Activated CD8-positive, alpha-beta memory T cell treated with anti-CD3 and anti-CD28 coated beads, Interleukin-2, amount 10 ng/mL, durations not matched to agents 7 days and 5 days (primary cell): ENCODE measurements at regions of chr2 and their contacts with region 1.

Region 1: DNA sequence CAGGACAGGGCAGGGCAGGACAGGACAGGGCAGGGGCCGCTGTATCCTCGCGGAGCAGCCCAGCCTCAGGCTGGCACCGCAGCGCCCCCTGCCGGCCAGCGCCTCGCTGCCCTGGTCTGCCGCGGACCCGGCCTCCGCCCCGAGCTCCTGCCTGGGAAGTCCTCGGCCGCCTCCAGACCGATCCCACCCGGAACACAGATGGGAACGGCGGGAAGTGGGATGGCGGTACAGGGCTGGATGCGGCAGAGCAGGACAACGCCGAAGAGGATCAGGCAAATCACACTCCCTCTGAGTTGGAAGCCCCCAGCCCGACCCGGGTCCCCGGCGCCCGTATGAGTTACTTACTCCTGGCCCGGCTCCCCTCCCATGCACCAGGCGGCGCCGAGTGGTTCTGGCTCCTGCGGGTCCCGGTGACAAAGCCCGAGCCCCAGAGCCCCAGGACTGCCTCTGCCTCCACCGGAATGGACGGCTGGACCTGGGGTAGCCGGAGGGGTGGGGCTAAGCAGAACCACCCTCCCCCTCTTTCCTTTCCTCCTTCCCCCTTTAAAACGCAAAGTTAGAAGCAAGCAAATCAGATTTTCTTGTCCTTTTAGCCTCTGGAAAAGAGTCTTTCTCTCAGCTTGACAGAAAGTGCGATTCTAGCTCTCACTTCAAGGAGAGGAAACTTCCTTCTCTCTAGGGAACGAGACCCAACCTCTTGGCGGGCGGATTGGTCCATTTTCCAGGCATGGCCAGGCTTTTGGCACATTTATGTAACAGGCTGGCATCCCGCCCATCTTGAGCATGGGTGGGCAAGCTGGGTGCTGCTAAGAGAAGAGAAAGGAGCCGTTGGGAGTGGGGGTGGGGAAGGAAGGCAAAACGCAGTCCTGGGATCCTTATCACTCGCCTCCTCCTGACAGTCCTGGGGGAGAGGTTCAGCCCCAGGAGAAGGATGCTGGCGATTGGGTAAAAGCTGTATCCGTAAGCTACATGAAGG is at the start of gene TP53I3:
- DNase-seq: peak; percentile 85
- ATAC-seq: peak; percentile 97
- H3K4me3 Mint-ChIP-seq: peak within 1 kb of the TSS; percentile 83
- H3K27ac Mint-ChIP-seq: peak within 1 kb of the TSS; percentile 86
- H3K4me1 Mint-ChIP-seq: peaks cover 19% of the 10 kb centered on the region
- H3K27me3 Mint-ChIP-seq: no peaks in the 10 kb centered on the region
- total RNA-seq, gene TP53I3: 3.6 to 6.3 TPM

Region 2: DNA sequence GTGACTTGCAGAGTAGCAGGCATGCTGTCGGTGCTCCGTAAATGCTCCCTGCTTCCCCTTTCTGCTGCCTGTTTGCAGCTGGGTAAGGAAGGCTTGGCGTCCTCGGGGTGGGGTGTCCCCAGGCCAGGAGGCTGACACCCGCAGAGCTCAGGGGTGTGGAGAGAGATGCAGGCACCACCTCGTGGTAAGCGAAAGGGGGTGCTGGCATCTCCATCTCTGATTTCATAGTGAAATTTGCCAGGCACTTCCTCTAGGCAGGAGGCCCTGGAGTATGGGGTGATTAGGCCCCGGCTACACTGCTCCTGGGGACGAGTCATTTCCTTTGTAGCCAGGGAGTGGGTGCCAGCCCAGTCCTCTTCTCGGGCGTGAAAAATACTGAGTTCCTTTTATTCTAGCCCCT is 539.3 kb before region 1 on chr2:
- CTCF ChIA-PET with region 1: no interaction called
- DNase-seq: no peak
- ATAC-seq: no peak
- H3K4me3 Mint-ChIP-seq: no peak overlapping the region
- H3K27ac Mint-ChIP-seq: no peak overlapping the region
- H3K4me1 Mint-ChIP-seq: peaks cover 3% of the 10 kb centered on the region
- H3K27me3 Mint-ChIP-seq: no peaks in the 10 kb centered on the region

Region 3: GRCh38 chr2:23824777-23825212 is 259.9 kb before region 1 on chr2:
- CTCF ChIA-PET with region 1: interaction called, 42 read pairs
- DNase-seq: no peak
- ATAC-seq: peak; percentile 65
- H3K4me3 Mint-ChIP-seq: no peak overlapping the region
- H3K27ac Mint-ChIP-seq: no peak overlapping the region
- H3K4me1 Mint-ChIP-seq: peaks cover 7% of the 10 kb centered on the region
- H3K27me3 Mint-ChIP-seq: no peaks in the 10 kb centered on the region

Region 4: DNA sequence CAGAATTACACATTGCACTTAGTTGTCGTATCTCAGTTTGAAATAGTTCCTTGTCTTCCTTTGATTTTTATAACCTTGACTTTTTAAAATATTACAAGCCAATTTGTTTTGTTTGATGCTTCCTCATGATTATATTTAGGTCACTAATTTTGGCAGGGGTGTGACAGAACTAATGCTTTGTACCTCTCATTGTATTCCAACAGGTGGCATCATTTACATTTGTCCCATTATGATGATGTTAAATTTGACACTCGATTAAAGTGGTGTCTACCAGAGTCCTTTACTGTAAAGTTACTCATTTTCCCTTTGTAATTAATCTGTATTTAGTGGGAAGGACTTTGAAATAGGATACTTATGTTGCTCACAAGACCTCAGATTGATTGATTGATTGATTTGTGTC is 96.3 kb before region 1 on chr2:
- CTCF ChIA-PET with region 1: interaction called, 10 read pairs
- DNase-seq: no peak
- ATAC-seq: peak; percentile 60
- H3K4me3 Mint-ChIP-seq: no peak overlapping the region
- H3K27ac Mint-ChIP-seq: no peak overlapping the region
- H3K4me1 Mint-ChIP-seq: no peaks in the 10 kb centered on the region
- H3K27me3 Mint-ChIP-seq: no peaks in the 10 kb centered on the region

Region 5: GRCh38 chr2:24046930-24047702 is 37.6 kb before region 1 on chr2 and contains the start of gene WDCP:
- CTCF ChIA-PET with region 1: interaction called, 18 read pairs
- DNase-seq: peak; percentile 98
- ATAC-seq: peak; percentile 98
- H3K4me3 Mint-ChIP-seq: peak within 1 kb of the TSS; percentile 97
- H3K27ac Mint-ChIP-seq: peak within 1 kb of the TSS; percentile 86
- H3K4me1 Mint-ChIP-seq: peaks cover 32% of the 10 kb centered on the region
- H3K27me3 Mint-ChIP-seq: peaks cover 2% of the 10 kb centered on the region
- total RNA-seq, gene WDCP: 22.8 to 26.5 TPM

Region 6: GRCh38 chr2:24065341-24065740 is 19.3 kb before region 1 on chr2:
- CTCF ChIA-PET with region 1: interaction called, 12 read pairs
- DNase-seq: no peak
- ATAC-seq: no peak
- H3K4me3 Mint-ChIP-seq: no peak overlapping the region
- H3K27ac Mint-ChIP-seq: no peak overlapping the region
- H3K4me1 Mint-ChIP-seq: peaks cover 17% of the 10 kb centered on the region
- H3K27me3 Mint-ChIP-seq: no peaks in the 10 kb centered on the region

Region 7: GRCh38 chr2:24123195-24123921 is 38.7 kb after region 1 on chr2 and contains the starts of genes FAM228B and PFN4:
- CTCF ChIA-PET with region 1: interaction called, 15 read pairs
- DNase-seq: peak; percentile 82
- ATAC-seq: peak; percentile 95
- H3K4me3 Mint-ChIP-seq: peak within 1 kb of the TSS; percentile 77
- H3K27ac Mint-ChIP-seq: peak within 1 kb of the TSS; percentile 75
- H3K4me1 Mint-ChIP-seq: peaks cover 28% of the 10 kb centered on the region
- H3K27me3 Mint-ChIP-seq: no peaks in the 10 kb centered on the region
- total RNA-seq, gene FAM228B: 5.4 to 9.3 TPM
- total RNA-seq, gene PFN4: not detected

Region 8: DNA sequence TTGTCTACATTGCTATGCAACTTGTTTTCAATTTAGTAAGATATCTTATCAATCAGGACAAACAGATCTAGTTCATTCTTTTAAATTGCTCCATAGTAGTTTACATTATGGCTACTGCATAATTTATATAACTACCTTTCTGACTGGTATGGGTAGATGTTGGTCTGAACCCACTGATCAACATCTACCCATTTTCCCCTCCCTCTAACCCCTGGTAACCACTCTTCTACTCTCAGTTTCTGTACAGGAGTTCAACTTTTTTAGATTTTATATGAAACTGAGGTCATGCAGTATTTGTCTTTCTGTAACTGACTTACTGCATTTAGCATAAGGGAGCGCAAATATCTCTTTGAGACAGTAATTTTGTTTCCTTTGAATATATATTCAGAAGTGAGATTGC is 202.5 kb after region 1 on chr2:
- CTCF ChIA-PET with region 1: no interaction called
- DNase-seq: no peak
- ATAC-seq: peak; percentile 53
- H3K4me3 Mint-ChIP-seq: no peak overlapping the region
- H3K27ac Mint-ChIP-seq: no peak overlapping the region
- H3K4me1 Mint-ChIP-seq: peaks cover 18% of the 10 kb centered on the region
- H3K27me3 Mint-ChIP-seq: no peaks in the 10 kb centered on the region